PC-9 (cell line): ENCODE measurements at regions of chr1 and their contacts with region 1.

Region 1: GRCh38 chr1:167152192-167152876 is 58.5 kb downstream of the STYXL2 start:
- DNase-seq: no peak
- H3K4me3 ChIP-seq: no peak overlapping the region
- H3K27ac ChIP-seq: no peak overlapping the region
- H3K4me1 ChIP-seq: peaks cover 8% of the 10 kb centered on the region
- H3K27me3 ChIP-seq: no peaks in the 10 kb centered on the region
- CTCF ChIP-seq: no peak

Region 2: DNA sequence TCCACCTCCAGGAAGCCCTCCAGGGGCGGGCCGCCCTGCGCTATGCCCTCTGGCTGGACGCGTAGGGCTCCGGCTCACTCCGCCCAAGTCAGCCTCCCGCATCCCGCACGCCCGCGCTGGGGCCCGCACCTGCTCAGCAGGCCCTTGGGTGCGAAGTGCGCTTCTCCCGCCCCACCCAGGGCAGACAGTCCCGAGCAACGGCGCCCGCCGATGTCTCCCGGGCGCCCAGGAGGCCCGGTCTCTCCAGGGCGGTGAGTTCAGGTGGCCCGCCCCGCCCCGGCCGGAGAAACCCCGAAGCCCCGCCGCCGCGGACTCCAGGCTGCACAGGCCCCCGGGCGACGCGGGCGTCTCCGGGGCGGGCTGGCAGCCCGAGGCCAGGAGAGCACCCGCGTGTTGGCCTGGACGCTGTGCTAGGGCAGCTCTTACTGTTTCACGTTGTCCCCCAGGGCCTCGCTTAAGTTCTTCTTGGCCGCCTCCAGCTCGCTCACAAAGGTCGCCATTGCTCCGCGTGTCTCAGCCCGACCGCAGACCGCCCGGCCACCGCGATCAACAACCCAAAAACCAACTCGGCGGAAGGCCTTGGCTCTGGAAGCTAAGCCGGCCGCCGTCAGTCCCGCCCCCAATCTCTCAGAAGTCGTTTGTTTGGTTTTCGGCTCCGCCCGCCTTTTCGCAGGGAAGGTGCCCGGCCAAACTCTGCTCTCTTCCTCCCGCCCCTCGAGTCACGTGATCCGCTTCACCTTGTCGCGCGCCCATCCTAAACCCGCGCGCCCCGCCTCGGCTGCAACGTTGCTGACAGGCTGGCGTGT is 276.4 kb before region 1 on chr1 and contains the start of gene TADA1:
- CTCF ChIA-PET with region 1: no interaction called
- POLR2A ChIA-PET with region 1: no interaction called
- intact Hi-C with region 1: no loop called
- DNase-seq: peak; percentile 91 to 96
- H3K4me3 ChIP-seq: peak within 1 kb of the TSS; percentile 87
- H3K27ac ChIP-seq: peak within 1 kb of the TSS; percentile 76
- H3K4me1 ChIP-seq: peaks cover 20% of the 10 kb centered on the region
- H3K27me3 ChIP-seq: no peaks in the 10 kb centered on the region
- CTCF ChIP-seq: no peak
- total RNA-seq, gene TADA1: 5.2 and 5.6 TPM in 2 replicates

Region 3: GRCh38 chr1:167202049-167202448 is 49.7 kb after region 1 on chr1:
- CTCF ChIA-PET with region 1: no interaction called
- POLR2A ChIA-PET with region 1: interaction called, 17 read pairs
- intact Hi-C with region 1: no loop called
- DNase-seq: no peak
- H3K4me3 ChIP-seq: no peak overlapping the region
- H3K27ac ChIP-seq: no peak overlapping the region
- H3K4me1 ChIP-seq: peaks cover 5% of the 10 kb centered on the region; the same call in 1 of the 2 replicates
- H3K27me3 ChIP-seq: no peaks in the 10 kb centered on the region
- CTCF ChIP-seq: no peak

Region 4: DNA sequence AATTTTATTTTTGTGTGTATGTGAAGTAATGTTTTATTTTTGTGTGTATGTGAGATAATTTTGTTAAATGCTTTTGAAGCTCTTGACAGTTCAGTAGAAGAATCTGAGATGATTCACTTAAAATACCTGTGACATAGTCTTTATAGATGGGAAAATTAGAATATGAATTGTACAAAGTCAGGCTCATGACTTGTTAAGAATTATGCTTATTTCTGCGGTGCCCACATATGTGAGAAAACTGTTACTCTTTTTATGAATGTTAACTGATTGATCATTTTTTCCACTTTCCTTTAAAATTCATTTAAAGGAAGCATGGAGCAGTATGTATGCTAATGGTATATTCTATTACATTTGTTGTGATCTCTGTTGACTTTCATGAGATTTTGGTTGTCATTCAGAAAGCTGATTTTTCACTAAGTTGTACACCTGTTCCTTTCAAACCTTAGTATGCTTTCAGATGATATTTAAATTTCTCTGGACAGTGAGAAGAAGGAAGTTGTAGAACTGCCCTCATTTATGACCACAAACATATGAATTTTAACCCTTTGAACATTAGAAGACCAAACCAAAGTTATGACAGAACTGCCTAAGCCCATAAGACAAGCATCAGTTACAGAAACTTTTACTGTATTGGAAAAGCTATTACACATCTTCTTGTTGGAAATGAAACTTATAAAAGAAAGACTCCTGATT is 178.4 kb after region 1 on chr1:
- CTCF ChIA-PET with region 1: no interaction called
- POLR2A ChIA-PET with region 1: no interaction called
- intact Hi-C with region 1: no loop called
- DNase-seq: no peak
- H3K4me3 ChIP-seq: no peak overlapping the region
- H3K27ac ChIP-seq: no peak overlapping the region
- H3K4me1 ChIP-seq: peaks cover 15% of the 10 kb centered on the region
- H3K27me3 ChIP-seq: no peaks in the 10 kb centered on the region
- CTCF ChIP-seq: no peak

Region 5: DNA sequence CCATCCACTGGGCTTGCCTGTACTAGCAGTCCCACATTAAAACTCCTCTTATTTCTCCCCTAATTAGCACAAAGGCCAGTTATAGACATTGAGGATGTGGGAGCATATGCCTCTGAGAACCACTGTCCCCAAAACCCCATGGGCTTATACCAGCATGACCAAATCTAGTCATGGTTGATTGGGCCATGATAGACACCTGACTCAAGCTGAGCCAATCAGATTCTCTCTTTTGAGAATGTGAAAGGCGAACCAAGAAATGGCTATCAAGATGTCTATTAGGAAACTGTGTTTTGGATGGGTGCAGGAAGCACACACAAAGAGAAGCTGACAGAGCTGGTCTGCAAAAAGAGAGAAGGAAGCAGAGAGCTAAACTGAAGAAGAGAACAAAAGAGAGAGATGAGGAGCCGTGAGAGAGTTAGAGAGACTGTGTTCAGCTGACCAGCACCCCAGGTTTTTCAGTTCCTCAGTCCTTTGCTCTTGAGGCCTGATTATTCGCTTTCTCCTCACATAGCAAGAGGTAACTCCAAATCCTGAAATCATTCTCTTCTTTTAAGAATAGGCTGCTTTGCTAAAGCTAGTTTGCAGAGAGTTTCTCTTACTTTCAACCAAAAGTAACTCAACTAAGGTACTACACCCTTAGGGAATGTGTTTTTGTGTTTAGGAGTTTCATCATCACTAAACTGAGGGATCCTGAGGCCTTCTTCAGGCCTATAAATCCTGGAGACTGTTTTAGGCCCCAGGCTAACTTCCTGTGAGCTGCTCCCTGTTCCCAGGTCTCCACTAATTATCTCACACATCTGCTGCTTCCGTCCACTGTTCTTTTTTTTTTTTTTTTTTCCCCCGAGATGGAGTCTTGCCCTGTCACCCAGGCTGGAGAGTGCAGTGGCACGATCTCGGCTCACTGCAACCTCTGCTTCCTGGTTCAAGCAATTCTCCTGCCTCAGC is 1018.5 kb after region 1 on chr1:
- CTCF ChIA-PET with region 1: no interaction called
- POLR2A ChIA-PET with region 1: no interaction called
- intact Hi-C with region 1: no loop called
- DNase-seq: no peak
- H3K4me3 ChIP-seq: no peak overlapping the region
- H3K27ac ChIP-seq: no peak overlapping the region
- H3K4me1 ChIP-seq: no peaks in the 10 kb centered on the region
- H3K27me3 ChIP-seq: no peaks in the 10 kb centered on the region
- CTCF ChIP-seq: no peak